ENCODE measurements at regions of chr22 and their contacts with region 1.

Region 1: GRCh38 chr22:29855611-29856181 is 17.6 kb upstream of the ASCC2 start:
- DNase-seq: no peak
- ATAC-seq: no peak
- H3K4me3 ChIP-seq: no peak overlapping the region
- H3K27ac ChIP-seq: no peak overlapping the region
- H3K4me1 ChIP-seq: no peaks in the 10 kb centered on the region
- H3K27me3 ChIP-seq: no peaks in the 10 kb centered on the region
- CTCF ChIP-seq: no peak

Region 2: GRCh38 chr22:30074994-30075393 is 219.3 kb after region 1 on chr22:
- CTCF ChIA-PET with region 1: no interaction called
- POLR2A ChIA-PET with region 1: interaction called, 11 read pairs
- intact Hi-C with region 1: no loop called
- DNase-seq: no peak
- ATAC-seq: no peak
- H3K4me3 ChIP-seq: no peak overlapping the region
- H3K27ac ChIP-seq: no peak overlapping the region
- H3K4me1 ChIP-seq: no peaks in the 10 kb centered on the region
- H3K27me3 ChIP-seq: peaks cover 12% of the 10 kb centered on the region
- CTCF ChIP-seq: no peak

Measured in PC-3 (cell line).